ENCODE measurements at regions of chr5 and their contacts with region 1.

Region 1: GRCh38 chr5:159010661-159011442 is 88.9 kb downstream of the EBF1 start:
- DNase-seq: no peak
- ATAC-seq: peak; percentile 82
- H3K4me3 Mint-ChIP-seq: peak overlapping the region; percentile 78
- H3K27ac Mint-ChIP-seq: peak overlapping the region; percentile 91
- H3K4me1 Mint-ChIP-seq: peaks cover 91% of the 10 kb centered on the region
- H3K27me3 Mint-ChIP-seq: no peaks in the 10 kb centered on the region
- CTCF ChIP-seq: no peak

Region 2: GRCh38 chr5:158995694-158996173 is 15.1 kb before region 1 on chr5:
- CTCF ChIA-PET with region 1: no interaction called
- POLR2A ChIA-PET with region 1: interaction called, 5 read pairs
- intact Hi-C with region 1: loop called (anchors 2 kb)
- DNase-seq: no peak
- ATAC-seq: peak; percentile 94
- H3K4me3 Mint-ChIP-seq: peak overlapping the region; percentile 1
- H3K27ac Mint-ChIP-seq: peak overlapping the region; percentile 76
- H3K4me1 Mint-ChIP-seq: peaks cover 56% of the 10 kb centered on the region
- H3K27me3 Mint-ChIP-seq: no peaks in the 10 kb centered on the region
- CTCF ChIP-seq: no peak

Measured in activated B cell treated with CpG ODN at 0.5 μM for 24 hours (primary cell).